PC-9 (cell line): ENCODE measurements at regions of chrX and their contacts with region 1.

Region 1: DNA sequence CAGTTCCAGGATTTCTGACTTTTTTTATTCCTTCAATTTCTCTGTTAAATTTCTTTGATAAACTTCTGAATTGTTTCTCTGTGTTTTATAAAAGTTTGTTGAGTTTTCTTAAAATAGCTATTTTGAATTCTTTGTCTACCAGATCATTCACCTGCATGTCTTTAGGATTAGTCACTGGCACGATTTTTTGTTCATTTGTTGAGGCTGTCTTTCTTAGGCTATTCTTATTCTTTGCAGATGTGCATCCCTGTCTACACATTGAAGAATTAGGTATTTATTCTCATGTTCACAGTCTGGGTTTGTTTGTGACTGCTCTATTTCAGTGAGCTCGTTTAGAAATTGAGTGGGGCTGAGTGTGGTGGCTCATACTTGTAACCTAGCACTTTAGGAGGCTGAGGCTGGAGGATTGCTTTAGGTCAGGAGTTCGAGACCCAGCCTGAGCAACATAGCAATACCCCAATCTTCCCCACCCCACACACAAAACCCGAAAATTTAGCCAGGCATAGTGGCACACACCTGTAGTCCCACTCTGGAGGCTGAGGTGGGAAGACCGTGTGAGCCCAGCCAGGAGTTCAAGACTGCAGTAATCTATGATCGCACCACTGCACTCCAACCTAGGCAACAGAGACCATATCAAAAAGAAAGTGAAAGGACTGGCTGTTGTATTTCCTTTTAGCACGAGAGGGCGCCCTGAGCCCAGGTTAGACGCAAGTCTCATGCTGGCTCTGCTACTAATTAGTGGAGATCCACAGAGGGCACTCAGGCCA is 42.0 kb downstream of the F8 start:
- DNase-seq: peak; percentile 42 to 79
- H3K4me3 ChIP-seq: peak overlapping the region; percentile 52; the same call in 1 of the 2 replicates
- H3K27ac ChIP-seq: no peak overlapping the region
- H3K4me1 ChIP-seq: no peaks in the 10 kb centered on the region
- H3K27me3 ChIP-seq: no peaks in the 10 kb centered on the region
- CTCF ChIP-seq: peak; percentile 79

Region 2: DNA sequence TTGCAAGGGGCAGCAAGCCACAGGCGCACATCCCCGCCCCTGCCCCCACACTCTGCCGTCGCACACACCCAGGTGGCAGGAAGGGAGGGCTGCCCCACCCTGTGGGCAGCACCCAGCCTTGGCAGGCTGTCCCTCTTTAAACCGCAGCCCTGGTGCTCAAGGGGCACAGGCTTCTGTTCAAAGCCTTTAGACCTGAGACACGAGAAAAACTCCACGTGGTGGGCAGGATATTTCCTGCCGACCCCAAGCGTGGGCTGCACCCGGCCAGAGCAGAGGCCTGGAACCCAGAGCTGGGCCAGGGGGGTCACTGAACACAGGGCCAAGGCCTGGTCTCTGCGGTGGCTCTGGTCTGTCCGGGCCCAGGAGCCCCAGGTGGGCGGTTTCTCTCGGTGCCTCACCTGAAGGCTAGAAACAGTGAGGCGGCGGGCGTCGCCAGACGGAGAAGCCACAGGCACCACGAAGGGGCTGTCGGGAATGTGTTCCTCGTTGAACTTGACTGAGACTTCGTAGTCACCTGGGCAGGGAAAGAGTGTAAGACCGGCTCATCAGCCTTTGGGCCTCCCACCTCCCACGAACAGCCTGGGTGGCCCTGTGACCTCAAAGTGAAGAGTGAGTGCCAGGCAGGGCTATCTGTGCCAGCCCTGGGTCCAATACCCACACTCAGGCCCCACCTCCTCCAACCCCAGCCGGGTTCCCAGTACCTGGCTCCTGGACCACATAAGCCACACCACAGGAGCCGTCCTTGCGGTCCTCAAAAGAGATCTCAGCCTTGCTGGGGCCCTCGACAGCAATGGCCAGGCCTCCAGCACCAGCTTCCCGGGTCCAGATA is 629.1 kb before region 1 on chrX:
- CTCF ChIA-PET with region 1: no interaction called
- POLR2A ChIA-PET with region 1: no interaction called
- intact Hi-C with region 1: no loop called
- DNase-seq: peak in 1 of 2 experiments; percentile 48
- H3K4me3 ChIP-seq: no peak overlapping the region
- H3K27ac ChIP-seq: no peak overlapping the region
- H3K4me1 ChIP-seq: no peaks in the 10 kb centered on the region
- H3K27me3 ChIP-seq: no peaks in the 10 kb centered on the region
- CTCF ChIP-seq: no peak

Region 3: GRCh38 chrX:154547245-154548027 is 433.1 kb before region 1 on chrX and contains the start of gene IKBKG:
- CTCF ChIA-PET with region 1: no interaction called
- POLR2A ChIA-PET with region 1: no interaction called
- intact Hi-C with region 1: no loop called
- DNase-seq: peak; percentile 82 to 98
- H3K4me3 ChIP-seq: peak within 1 kb of the TSS; percentile 99
- H3K27ac ChIP-seq: peak within 1 kb of the TSS; percentile 100
- H3K4me1 ChIP-seq: peaks cover 27% of the 10 kb centered on the region
- H3K27me3 ChIP-seq: no peaks in the 10 kb centered on the region
- CTCF ChIP-seq: no peak
- total RNA-seq, gene IKBKG: 68.3 and 69.4 TPM in 2 replicates

Region 4: DNA sequence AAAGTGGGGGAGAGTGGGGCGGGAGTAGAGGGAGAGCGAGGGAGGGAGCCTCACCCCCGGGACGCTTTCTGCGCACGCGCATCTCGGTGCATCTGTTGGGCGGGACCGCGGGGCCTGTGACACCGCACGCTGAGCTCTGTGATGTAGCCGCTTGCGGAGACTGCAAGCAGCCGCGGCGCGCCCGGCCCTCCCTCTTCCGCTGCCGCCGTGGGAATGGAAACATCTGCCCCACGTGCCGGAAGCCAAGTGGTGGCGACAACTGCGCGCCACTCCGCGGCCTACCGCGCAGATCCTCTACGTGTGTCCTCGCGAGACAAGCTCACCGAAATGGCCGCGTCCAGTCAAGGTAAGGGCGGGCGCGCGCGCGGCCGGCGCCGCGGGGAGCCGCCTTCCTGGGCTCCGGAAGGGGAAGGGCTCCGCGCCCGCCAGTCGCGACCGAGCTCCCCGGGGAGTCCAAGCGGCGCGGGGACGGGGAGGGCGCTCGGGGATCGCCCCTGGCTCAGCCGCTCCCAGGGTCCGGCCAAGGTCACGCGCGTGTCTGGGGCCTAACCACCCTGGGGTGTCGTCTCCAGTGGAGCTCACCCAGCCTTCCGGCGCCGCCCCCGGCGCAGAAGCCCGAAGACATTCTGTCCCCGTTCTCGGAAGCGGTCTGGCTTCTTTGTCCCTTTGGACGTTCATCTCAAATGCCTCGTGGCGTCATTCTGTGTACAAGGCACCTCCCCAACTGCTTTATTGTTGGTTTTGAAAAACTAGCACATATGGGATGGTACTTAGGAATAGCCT is 46.4 kb after region 1 on chrX and contains the start of gene FUNDC2:
- CTCF ChIA-PET with region 1: no interaction called
- POLR2A ChIA-PET with region 1: interaction called, 33 read pairs
- intact Hi-C with region 1: loop called (anchors 1 kb)
- DNase-seq: peak; percentile 57 to 98
- H3K4me3 ChIP-seq: peak within 1 kb of the TSS; percentile 94
- H3K27ac ChIP-seq: peak within 1 kb of the TSS; percentile 96
- H3K4me1 ChIP-seq: peaks cover 13% of the 10 kb centered on the region
- H3K27me3 ChIP-seq: no peaks in the 10 kb centered on the region
- CTCF ChIP-seq: no peak
- total RNA-seq, gene FUNDC2: 90.6 and 108 TPM in 2 replicates

Region 5: GRCh38 chrX:155056877-155057792 is 76.6 kb after region 1 on chrX:
- CTCF ChIA-PET with region 1: no interaction called
- POLR2A ChIA-PET with region 1: no interaction called
- intact Hi-C with region 1: loop called (anchors 1 kb)
- DNase-seq: peak in 1 of 2 experiments; percentile 66
- H3K4me3 ChIP-seq: no peak overlapping the region
- H3K27ac ChIP-seq: no peak overlapping the region
- H3K4me1 ChIP-seq: no peaks in the 10 kb centered on the region
- H3K27me3 ChIP-seq: no peaks in the 10 kb centered on the region
- CTCF ChIP-seq: peak; percentile 78

Region 6: GRCh38 chrX:155179346-155179986 is 199.0 kb after region 1 on chrX:
- CTCF ChIA-PET with region 1: no interaction called
- POLR2A ChIA-PET with region 1: no interaction called
- intact Hi-C with region 1: loop called (anchors 1 kb)
- DNase-seq: no peak
- H3K4me3 ChIP-seq: no peak overlapping the region
- H3K27ac ChIP-seq: no peak overlapping the region
- H3K4me1 ChIP-seq: no peaks in the 10 kb centered on the region
- H3K27me3 ChIP-seq: no peaks in the 10 kb centered on the region
- CTCF ChIP-seq: 0 out of 2 replicates have a peak, but pooled peaks have one; percentile 30

Region 7: DNA sequence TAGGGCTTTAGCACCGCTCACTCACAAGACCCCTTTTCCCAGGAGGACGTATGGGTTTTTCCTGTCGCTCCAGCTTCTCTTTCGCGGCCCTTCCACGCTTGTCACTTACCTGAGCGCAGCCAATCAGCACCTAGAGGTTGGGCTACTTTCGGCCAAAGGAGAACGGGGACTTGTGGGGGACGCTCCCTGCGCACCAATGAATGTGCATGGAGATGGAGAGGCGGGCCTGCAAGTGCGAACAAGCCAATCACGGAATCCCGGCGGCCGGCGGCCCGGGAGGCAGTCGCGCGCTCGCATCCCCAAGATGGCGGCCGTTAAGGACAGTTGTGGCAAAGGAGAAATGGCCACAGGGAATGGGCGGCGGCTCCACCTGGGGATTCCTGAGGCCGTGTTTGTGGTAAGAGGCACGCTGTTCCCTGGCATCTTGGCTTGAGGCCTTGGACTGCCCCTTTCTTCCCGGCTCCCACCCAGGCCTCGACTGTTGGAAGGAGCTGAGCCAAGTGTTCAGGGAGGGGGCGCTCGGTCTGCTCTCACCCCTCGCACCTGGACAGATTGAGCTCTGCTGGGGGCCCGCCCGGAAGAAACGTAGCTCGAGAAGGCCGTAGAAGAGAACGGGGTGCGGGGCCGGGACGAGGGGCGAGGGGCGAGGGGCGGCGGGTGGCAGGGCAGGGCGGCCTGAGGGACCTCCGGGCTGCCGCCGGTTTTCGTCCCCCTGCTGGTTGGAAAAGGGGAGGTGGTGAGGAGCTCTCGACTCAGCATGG is 235.8 kb after region 1 on chrX and contains the start of gene VBP1:
- CTCF ChIA-PET with region 1: no interaction called
- POLR2A ChIA-PET with region 1: no interaction called
- intact Hi-C with region 1: loop called (anchors 10 kb)
- DNase-seq: peak; percentile 89 to 93
- H3K4me3 ChIP-seq: peak within 1 kb of the TSS; percentile 81
- H3K27ac ChIP-seq: peak within 1 kb of the TSS; percentile 58
- H3K4me1 ChIP-seq: peaks cover 10% of the 10 kb centered on the region
- H3K27me3 ChIP-seq: no peaks in the 10 kb centered on the region
- CTCF ChIP-seq: peak; percentile 63; the same call in 1 of the 2 replicates
- total RNA-seq, gene VBP1: 68.9 and 87.8 TPM in 2 replicates

Region 8: DNA sequence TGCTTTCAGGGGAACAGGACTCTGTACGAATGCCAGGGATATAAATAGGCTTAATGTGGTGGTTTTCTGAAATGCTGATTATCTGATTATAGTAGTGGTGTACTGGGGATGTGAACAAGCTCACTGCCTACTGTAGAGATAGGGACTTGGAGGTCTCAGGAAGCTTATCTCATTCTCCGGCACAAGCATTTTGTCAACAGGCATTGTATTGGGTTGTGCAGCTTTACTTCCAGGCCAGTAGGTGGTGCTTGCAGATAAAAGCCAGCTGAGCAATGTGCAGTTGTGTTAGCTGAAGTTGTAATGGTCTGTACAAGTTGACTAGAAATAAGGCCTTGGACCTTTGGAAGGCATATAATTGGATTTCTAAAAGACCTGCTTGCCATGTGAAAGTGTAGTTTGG is 681.8 kb after region 1 on chrX:
- CTCF ChIA-PET with region 1: no interaction called
- POLR2A ChIA-PET with region 1: no interaction called
- intact Hi-C with region 1: loop called (anchors 10 kb)
- DNase-seq: no peak
- H3K4me3 ChIP-seq: no peak overlapping the region
- H3K27ac ChIP-seq: no peak overlapping the region
- H3K4me1 ChIP-seq: no peaks in the 10 kb centered on the region
- H3K27me3 ChIP-seq: no peaks in the 10 kb centered on the region
- CTCF ChIP-seq: peak; percentile 52; the same call in 1 of the 2 replicates

Region 9: DNA sequence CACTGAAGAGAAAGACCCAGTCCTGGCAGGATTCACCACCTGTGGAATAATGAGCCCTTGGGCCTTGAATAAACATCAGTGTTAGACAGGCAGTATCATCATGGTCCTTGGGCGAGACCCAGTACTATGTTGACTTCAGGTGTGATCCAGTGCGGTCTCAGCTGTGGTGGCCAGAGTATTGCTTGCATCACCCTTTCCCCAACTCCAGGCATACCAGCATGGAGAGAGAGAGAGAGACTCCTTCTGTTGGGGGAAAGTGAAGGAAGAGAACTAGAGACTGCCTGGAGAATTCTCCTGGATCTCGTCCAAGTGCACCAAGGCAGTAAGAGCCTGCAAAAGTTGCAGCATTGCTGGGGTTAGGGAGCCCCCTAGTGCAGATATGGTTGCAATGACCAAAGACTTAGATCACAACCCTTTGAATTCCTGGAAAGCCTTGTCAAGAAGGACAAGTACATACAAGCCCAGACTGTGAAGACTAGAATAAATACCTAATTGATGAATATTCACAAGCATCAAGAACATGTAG is 839.5 kb after region 1 on chrX:
- CTCF ChIA-PET with region 1: no interaction called
- POLR2A ChIA-PET with region 1: no interaction called
- intact Hi-C with region 1: loop called (anchors 1 kb)
- DNase-seq: peak; percentile 57 to 71
- H3K4me3 ChIP-seq: no peak overlapping the region
- H3K27ac ChIP-seq: no peak overlapping the region
- H3K4me1 ChIP-seq: no peaks in the 10 kb centered on the region
- H3K27me3 ChIP-seq: no peaks in the 10 kb centered on the region
- CTCF ChIP-seq: peak; percentile 79